ENCODE measurements at regions of chr4 and their contacts with region 1.

Region 1: GRCh38 chr4:6716018-6716911 is at the start of gene BLOC1S4:
- DNase-seq: no peak
- ATAC-seq: peak; percentile 83
- H3K4me3 ChIP-seq: peak within 1 kb of the TSS; percentile 66 to 75
- H3K27ac ChIP-seq: peak within 1 kb of the TSS; percentile 96
- H3K4me1 ChIP-seq: peaks cover 14% of the 10 kb centered on the region
- H3K27me3 ChIP-seq: no peaks in the 10 kb centered on the region
- CTCF ChIP-seq: no peak
- total RNA-seq, gene BLOC1S4: 10.7 TPM

Region 2: DNA sequence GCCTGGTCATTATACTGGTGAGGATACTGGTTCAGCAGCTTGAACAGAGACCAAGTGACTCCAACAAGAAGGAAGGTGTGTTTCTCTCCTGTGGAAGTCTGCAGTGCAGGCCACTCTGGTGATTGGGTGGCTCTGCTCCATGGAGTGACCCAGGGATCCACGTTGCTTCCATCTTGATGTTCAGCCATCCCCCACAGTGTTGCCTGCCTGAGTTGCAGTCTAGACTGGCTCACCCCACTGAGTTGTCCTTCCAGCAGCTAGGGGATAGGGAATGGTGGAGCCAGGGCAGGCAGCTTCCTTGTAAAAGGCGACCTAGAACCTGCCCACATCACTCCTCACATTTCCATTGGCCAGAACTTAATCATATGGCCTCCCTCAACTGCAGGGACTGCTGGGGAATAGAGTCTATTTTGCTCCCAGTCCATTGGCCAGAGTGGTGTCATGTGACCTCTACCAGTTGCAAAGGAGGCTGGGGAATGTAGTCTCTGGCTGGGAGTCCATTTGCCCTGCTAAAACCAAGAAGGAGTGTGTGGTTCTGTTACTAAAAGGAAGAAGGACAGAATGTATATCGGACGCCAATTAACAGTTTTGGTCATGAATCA is 133.3 kb before region 1 on chr4:
- CTCF ChIA-PET with region 1: no interaction called
- POLR2A ChIA-PET with region 1: no interaction called
- in situ Hi-C with region 1: no loop called
- intact Hi-C with region 1: no loop called
- DNase-seq: no peak
- ATAC-seq: peak; percentile 75; the same call in 1 of the 2 replicates
- H3K4me3 ChIP-seq: no peak overlapping the region
- H3K27ac ChIP-seq: no peak overlapping the region
- H3K4me1 ChIP-seq: no peaks in the 10 kb centered on the region
- H3K27me3 ChIP-seq: no peaks in the 10 kb centered on the region
- CTCF ChIP-seq: no peak

Region 3: GRCh38 chr4:6692340-6693161 is 23.7 kb before region 1 on chr4:
- CTCF ChIA-PET with region 1: interaction called, 3 read pairs
- POLR2A ChIA-PET with region 1: interaction called, 14 read pairs
- in situ Hi-C with region 1: no loop called
- intact Hi-C with region 1: no loop called
- DNase-seq: no peak
- ATAC-seq: no peak
- H3K4me3 ChIP-seq: no peak overlapping the region
- H3K27ac ChIP-seq: peak overlapping the region; percentile 59; the same call in 1 of the 2 replicates
- H3K4me1 ChIP-seq: peaks cover 60% of the 10 kb centered on the region
- H3K27me3 ChIP-seq: no peaks in the 10 kb centered on the region
- CTCF ChIP-seq: no peak

Region 4: DNA sequence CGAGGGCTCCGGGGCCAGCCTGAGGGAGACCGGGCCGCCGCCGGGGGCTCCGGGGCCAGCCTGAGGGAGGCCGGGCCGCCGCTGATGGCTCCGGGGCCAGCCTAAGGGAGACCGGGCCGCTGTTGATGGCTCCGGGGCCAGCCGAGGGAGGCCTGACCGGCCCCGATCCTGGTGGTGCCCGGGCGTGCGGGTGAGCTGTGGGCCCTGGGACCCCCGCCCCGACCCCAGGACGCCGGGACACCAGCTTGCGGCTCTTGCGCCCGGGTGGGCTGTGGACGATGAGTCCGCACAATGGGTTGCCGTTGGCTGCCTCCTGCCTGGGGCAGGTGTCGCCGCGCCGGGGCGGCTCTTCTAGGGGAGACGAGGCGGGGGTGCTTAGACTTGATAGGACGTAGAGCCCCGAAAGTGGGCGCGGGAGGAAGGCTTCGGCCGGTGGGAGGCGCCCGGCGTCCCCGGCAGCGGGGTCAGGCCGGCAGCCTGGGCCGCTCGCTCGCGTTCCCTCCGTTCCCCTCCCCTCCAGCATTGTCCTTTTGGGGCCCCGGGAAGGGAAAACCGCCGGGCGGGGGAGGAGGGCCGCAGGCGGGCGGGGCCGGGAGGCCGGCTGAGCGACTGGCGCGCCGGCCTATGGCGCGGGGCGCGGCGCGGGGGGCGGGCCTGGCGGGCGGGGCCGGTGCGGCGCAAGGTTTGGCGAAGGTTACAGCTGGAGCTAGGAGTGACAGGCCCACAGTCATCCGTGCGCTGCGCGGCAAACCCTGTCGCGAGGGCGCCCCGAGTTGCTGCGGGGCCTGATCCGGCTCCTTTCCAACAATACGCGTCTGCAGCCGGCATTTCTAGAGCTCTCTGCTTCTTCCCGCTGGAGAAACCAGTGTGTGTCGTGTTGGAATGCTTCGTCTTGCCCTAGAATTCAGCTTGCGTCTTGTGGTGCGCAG is 67.1 kb after region 1 on chr4:
- CTCF ChIA-PET with region 1: interaction called, 3 read pairs
- POLR2A ChIA-PET with region 1: no interaction called
- in situ Hi-C with region 1: no loop called
- intact Hi-C with region 1: loop called (anchors 10 kb)
- DNase-seq: no peak
- ATAC-seq: peak; percentile 85
- H3K4me3 ChIP-seq: peak overlapping the region; percentile 79 to 82
- H3K27ac ChIP-seq: peak overlapping the region; percentile 79
- H3K4me1 ChIP-seq: peaks cover 15% of the 10 kb centered on the region
- H3K27me3 ChIP-seq: no peaks in the 10 kb centered on the region
- CTCF ChIP-seq: no peak

Region 5: GRCh38 chr4:6851431-6851830 is 135.2 kb after region 1 on chr4:
- CTCF ChIA-PET with region 1: no interaction called
- POLR2A ChIA-PET with region 1: interaction called, 11 read pairs
- in situ Hi-C with region 1: no loop called
- intact Hi-C with region 1: no loop called
- DNase-seq: no peak
- ATAC-seq: no peak
- H3K4me3 ChIP-seq: no peak overlapping the region
- H3K27ac ChIP-seq: no peak overlapping the region
- H3K4me1 ChIP-seq: no peaks in the 10 kb centered on the region; the same call in 1 of the 2 replicates
- H3K27me3 ChIP-seq: no peaks in the 10 kb centered on the region
- CTCF ChIP-seq: no peak

Region 6: GRCh38 chr4:6873792-6874461 is 157.7 kb after region 1 on chr4:
- CTCF ChIA-PET with region 1: interaction called, 8 read pairs
- POLR2A ChIA-PET with region 1: interaction called, 14 read pairs
- in situ Hi-C with region 1: no loop called
- intact Hi-C with region 1: loop called (anchors 2 kb)
- DNase-seq: peak; percentile 50
- ATAC-seq: peak; percentile 87
- H3K4me3 ChIP-seq: no peak overlapping the region
- H3K27ac ChIP-seq: no peak overlapping the region
- H3K4me1 ChIP-seq: no peaks in the 10 kb centered on the region
- H3K27me3 ChIP-seq: no peaks in the 10 kb centered on the region
- CTCF ChIP-seq: peak; percentile 83

Region 7: GRCh38 chr4:6944301-6945051 is 228.2 kb after region 1 on chr4:
- CTCF ChIA-PET with region 1: interaction called, 10 read pairs
- POLR2A ChIA-PET with region 1: no interaction called
- in situ Hi-C with region 1: no loop called
- intact Hi-C with region 1: no loop called
- DNase-seq: no peak
- ATAC-seq: peak; percentile 19; the same call in 1 of the 2 replicates
- H3K4me3 ChIP-seq: no peak overlapping the region
- H3K27ac ChIP-seq: peak overlapping the region; percentile 85
- H3K4me1 ChIP-seq: peaks cover 45% of the 10 kb centered on the region
- H3K27me3 ChIP-seq: no peaks in the 10 kb centered on the region
- CTCF ChIP-seq: no peak